Panc1 (cell line): ENCODE measurements at regions of chr12 and their contacts with region 1.

Region 1: GRCh38 chr12:116533343-116534251 is 25.6 kb upstream of the MAP1LC3B2 start:
- DNase-seq: peak; percentile 33
- ATAC-seq: peak; percentile 88
- H3K4me3 ChIP-seq: peak overlapping the region; percentile 58 to 83
- H3K27ac ChIP-seq: peak overlapping the region; percentile 87
- H3K4me1 ChIP-seq: peaks cover 54% of the 10 kb centered on the region
- H3K27me3 ChIP-seq: no peaks in the 10 kb centered on the region
- CTCF ChIP-seq: no peak

Region 2: GRCh38 chr12:116236148-116236731 is 297.4 kb before region 1 on chr12:
- CTCF ChIA-PET with region 1: no interaction called
- POLR2A ChIA-PET with region 1: interaction called, 22 read pairs
- in situ Hi-C with region 1: no loop called
- intact Hi-C with region 1: no loop called
- DNase-seq: peak; percentile 32
- ATAC-seq: peak; percentile 72; the same call in 1 of the 2 replicates
- H3K4me3 ChIP-seq: no peak overlapping the region
- H3K27ac ChIP-seq: peak overlapping the region; percentile 60
- H3K4me1 ChIP-seq: peaks cover 29% of the 10 kb centered on the region
- H3K27me3 ChIP-seq: no peaks in the 10 kb centered on the region
- CTCF ChIP-seq: peak; percentile 76

Region 3: DNA sequence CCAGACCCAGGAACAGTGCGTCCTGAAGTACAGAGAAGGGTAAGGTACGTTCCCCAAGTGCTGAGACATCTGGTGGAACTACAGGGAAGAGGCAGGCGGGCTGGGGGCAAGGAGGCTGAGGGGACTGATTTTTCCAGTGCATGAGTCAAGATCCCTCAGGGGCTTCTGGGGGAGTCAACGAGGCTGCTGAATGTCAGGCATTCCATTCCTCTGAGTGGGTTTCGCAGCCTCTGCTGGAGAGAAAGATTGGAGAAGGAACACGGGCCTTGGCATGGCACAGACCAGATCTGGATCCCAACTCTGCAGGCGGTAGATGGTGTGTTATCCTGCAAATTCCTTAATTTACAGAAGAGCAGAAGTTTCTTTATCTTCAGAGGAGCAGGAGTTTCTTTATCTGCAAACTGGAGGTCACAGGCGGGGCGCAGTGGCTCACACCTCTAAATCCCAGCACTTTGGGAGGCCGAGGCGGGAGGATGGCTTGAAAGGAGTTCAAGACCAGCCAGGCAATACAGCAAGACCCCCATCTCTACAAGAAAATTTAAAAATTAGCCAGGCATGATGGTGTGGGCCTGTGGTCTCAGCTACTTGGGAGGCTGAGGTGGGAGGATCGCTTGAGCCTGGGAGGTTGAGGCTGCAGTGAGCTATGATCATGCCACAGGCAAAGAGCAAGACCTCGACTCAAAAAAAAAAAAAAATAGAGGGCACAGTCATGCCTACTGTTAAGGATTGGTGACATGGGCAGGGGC is 107.0 kb before region 1 on chr12:
- CTCF ChIA-PET with region 1: interaction called, 16 read pairs
- POLR2A ChIA-PET with region 1: no interaction called
- in situ Hi-C with region 1: no loop called
- intact Hi-C with region 1: no loop called
- DNase-seq: peak; percentile 7
- ATAC-seq: peak; percentile 89
- H3K4me3 ChIP-seq: peak overlapping the region in 1 of 2 experiments; percentile 49; a peak in 2 of 4 replicates
- H3K27ac ChIP-seq: peak overlapping the region; percentile 99
- H3K4me1 ChIP-seq: peaks cover 31% of the 10 kb centered on the region
- H3K27me3 ChIP-seq: no peaks in the 10 kb centered on the region
- CTCF ChIP-seq: no peak; the same call in 1 of the 2 replicates

Region 4: GRCh38 chr12:116818948-116819832 is 285.6 kb after region 1 on chr12:
- CTCF ChIA-PET with region 1: interaction called, 11 read pairs
- POLR2A ChIA-PET with region 1: no interaction called
- in situ Hi-C with region 1: no loop called
- intact Hi-C with region 1: no loop called
- DNase-seq: peak; percentile 28
- ATAC-seq: peak; percentile 91
- H3K4me3 ChIP-seq: peak overlapping the region; percentile 78 to 96
- H3K27ac ChIP-seq: peak overlapping the region; percentile 85
- H3K4me1 ChIP-seq: peaks cover 8% of the 10 kb centered on the region
- H3K27me3 ChIP-seq: no peaks in the 10 kb centered on the region
- CTCF ChIP-seq: no peak